Naive thymus-derived CD4-positive, alpha-beta T cell (primary cell): ENCODE measurements at regions of chr3 and their contacts with region 1.

Region 1: DNA sequence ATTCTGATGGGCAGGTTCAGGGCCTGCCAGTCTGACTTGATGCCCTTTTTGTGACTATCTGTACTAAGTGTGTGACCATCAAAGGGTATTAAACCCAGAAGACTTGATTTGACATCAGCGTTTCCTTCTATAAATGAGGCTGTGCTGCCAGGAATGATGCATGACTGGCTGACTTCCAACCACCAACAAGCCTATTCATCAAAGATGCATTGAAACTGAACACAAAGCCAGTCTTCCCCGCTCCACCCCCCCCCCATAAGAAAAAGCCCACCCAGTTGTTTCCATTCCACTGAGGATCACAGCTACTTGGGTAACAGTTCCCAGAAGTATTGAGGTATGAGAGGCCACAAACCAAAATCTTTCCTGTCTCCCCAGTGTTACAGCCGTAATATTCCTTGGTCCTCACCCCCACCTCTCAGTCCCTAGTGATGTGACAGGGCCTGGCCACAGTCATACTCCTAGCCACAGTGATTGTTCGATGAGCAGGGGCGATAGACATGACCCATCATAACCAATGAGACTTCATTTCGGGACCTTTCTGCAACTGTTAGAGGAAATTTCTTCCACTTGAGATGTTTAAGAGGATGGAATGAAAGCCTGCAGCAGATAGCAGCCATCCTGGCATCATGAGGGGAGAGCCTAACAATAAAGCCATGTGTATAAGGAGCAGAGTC is 22.6 kb downstream of the SH3BP5 start:
- DNase-seq: no peak
- ATAC-seq: no peak
- H3K4me3 ChIP-seq: no peak overlapping the region
- H3K4me3 Mint-ChIP-seq: peak overlapping the region in 6 of 10 donors; percentile 17 to 69 (median 46)
- H3K27ac ChIP-seq: no peak overlapping the region
- H3K27ac Mint-ChIP-seq: peak overlapping the region in 8 of 9 donors; percentile 23 to 89 (median 66)
- H3K4me1 ChIP-seq: peaks cover 44 to 52% of the 10 kb centered on the region in 2 donors
- H3K4me1 Mint-ChIP-seq: peaks cover 36 to 72% (median 63%) of the 10 kb centered on the region in 7 donors
- H3K27me3 ChIP-seq: no peaks in the 10 kb centered on the region
- H3K27me3 Mint-ChIP-seq: no peaks in the 10 kb centered on the region

Region 2: GRCh38 chr3:14725013-14725412 is 584.8 kb before region 1 on chr3:
- CTCF ChIA-PET with region 1: no interaction called
- POLR2A ChIA-PET with region 1: no interaction called
- intact Hi-C with region 1: no loop called
- DNase-seq: no peak
- ATAC-seq: no peak
- H3K4me3 ChIP-seq: no peak overlapping the region
- H3K4me3 Mint-ChIP-seq: no peak overlapping the region
- H3K27ac ChIP-seq: no peak overlapping the region
- H3K27ac Mint-ChIP-seq: no peak overlapping the region
- H3K4me1 ChIP-seq: no peaks in the 10 kb centered on the region
- H3K4me1 Mint-ChIP-seq: no peaks in the 10 kb centered on the region
- H3K27me3 ChIP-seq: no peaks in the 10 kb centered on the region
- H3K27me3 Mint-ChIP-seq: no peaks in the 10 kb centered on the region

Region 3: DNA sequence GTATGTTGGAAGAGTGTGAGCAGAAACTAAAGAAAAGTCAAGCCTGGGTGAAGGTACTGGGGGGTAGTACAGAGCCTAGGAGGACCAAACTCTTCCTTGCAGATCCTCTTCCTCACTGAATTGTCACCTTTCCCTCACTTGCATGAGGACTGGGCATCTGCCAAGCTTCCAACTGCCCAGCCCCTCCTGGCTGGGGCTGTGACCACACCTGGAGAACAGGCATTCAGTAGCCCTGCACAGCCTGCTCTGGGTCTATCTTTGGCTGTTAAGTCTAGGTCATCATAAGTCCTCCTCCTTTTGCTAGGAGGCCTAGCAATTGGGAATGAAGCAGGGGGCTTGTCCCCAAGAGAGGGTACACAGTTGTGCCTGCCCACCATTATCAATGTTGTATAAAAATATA is 48.5 kb before region 1 on chr3:
- CTCF ChIA-PET with region 1: no interaction called
- POLR2A ChIA-PET with region 1: no interaction called
- intact Hi-C with region 1: no loop called
- DNase-seq: no peak
- ATAC-seq: no peak
- H3K4me3 ChIP-seq: no peak overlapping the region
- H3K4me3 Mint-ChIP-seq: no peak overlapping the region
- H3K27ac ChIP-seq: no peak overlapping the region
- H3K27ac Mint-ChIP-seq: peak overlapping the region; percentile 39 to 88 (median 83)
- H3K4me1 ChIP-seq: peaks cover 0 to 5% of the 10 kb centered on the region in 2 donors
- H3K4me1 Mint-ChIP-seq: peaks cover 10 to 38% (median 27%) of the 10 kb centered on the region in 7 donors
- H3K27me3 ChIP-seq: no peaks in the 10 kb centered on the region
- H3K27me3 Mint-ChIP-seq: no peaks in the 10 kb centered on the region

Region 4: GRCh38 chr3:15325242-15325641 is 15.4 kb after region 1 on chr3:
- CTCF ChIA-PET with region 1: interaction called, 3 read pairs
- POLR2A ChIA-PET with region 1: interaction called, 9 read pairs
- intact Hi-C with region 1: loop called in 1 of 2 experiments (anchors 1 kb)
- DNase-seq: no peak
- ATAC-seq: no peak
- H3K4me3 ChIP-seq: no peak overlapping the region
- H3K4me3 Mint-ChIP-seq: peak overlapping the region in 3 of 10 donors; percentile 34 to 55 (median 40)
- H3K27ac ChIP-seq: no peak overlapping the region
- H3K27ac Mint-ChIP-seq: peak overlapping the region in 7 of 9 donors; percentile 41 to 87 (median 56)
- H3K4me1 ChIP-seq: peaks cover 34 to 49% of the 10 kb centered on the region in 2 donors
- H3K4me1 Mint-ChIP-seq: peaks cover 46 to 94% (median 83%) of the 10 kb centered on the region in 7 donors
- H3K27me3 ChIP-seq: no peaks in the 10 kb centered on the region
- H3K27me3 Mint-ChIP-seq: no peaks in the 10 kb centered on the region

Region 5: DNA sequence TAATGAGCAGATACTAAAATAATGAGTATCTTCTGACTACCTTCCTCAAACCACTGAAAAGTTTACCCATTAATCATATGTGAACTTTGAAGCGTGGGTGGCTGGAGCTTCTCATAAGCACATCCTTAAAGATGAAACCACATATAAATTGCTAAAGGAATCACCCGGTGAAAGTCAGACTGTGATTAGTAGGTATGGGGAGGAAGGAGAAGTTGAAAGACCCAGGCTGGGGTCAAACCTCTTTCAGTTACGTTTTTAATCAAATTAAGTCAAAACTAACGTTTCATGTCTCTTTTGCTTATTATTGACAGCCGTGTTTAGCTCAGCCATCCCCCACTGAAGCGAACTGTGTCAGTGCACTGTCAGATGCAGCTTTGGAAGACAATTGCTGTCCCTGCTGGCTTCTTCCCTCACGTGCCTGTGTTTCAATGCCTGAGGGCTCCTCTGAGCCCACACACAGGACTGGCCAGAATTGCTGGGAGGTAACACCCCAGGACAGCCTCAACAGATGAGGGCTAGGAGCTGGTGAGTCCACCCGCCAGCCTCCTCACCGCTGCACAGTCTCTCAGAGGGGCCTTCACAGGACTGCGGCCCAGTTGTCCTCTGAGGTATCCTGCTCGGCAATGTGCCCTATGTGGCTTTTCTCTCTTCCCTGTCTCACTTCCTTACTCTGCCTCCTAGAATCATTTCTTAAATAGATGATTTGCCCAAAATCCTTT is 51.9 kb after region 1 on chr3:
- CTCF ChIA-PET with region 1: no interaction called
- POLR2A ChIA-PET with region 1: interaction called, 3 read pairs
- intact Hi-C with region 1: loop called in 1 of 2 experiments (anchors 1 kb)
- DNase-seq: peak in 1 of 9 donors; percentile 59
- ATAC-seq: peak; percentile 49
- H3K4me3 ChIP-seq: no peak overlapping the region
- H3K4me3 Mint-ChIP-seq: peak overlapping the region; percentile 38 to 65 (median 54)
- H3K27ac ChIP-seq: no peak overlapping the region
- H3K27ac Mint-ChIP-seq: peak overlapping the region in 8 of 9 donors; percentile 37 to 73 (median 56)
- H3K4me1 ChIP-seq: peaks cover 21 to 29% of the 10 kb centered on the region in 2 donors
- H3K4me1 Mint-ChIP-seq: peaks cover 25 to 57% (median 38%) of the 10 kb centered on the region in 7 donors
- H3K27me3 ChIP-seq: no peaks in the 10 kb centered on the region
- H3K27me3 Mint-ChIP-seq: no peaks in the 10 kb centered on the region